CD8-positive, alpha-beta T cell (primary cell): ENCODE measurements at regions of chr6 and their contacts with region 1.

Region 1: GRCh38 chr6:62528894-62529526 is 243.0 kb upstream of the KHDRBS2 start:
- DNase-seq: no peak
- ATAC-seq: no peak
- H3K4me3 ChIP-seq: no peak overlapping the region
- H3K4me3 Mint-ChIP-seq: no peak overlapping the region
- H3K27ac ChIP-seq: no peak overlapping the region
- H3K27ac Mint-ChIP-seq: no peak overlapping the region
- H3K4me1 ChIP-seq: no peaks in the 10 kb centered on the region
- H3K4me1 Mint-ChIP-seq: no peaks in the 10 kb centered on the region
- H3K27me3 ChIP-seq: no peaks in the 10 kb centered on the region
- H3K27me3 Mint-ChIP-seq: no peaks in the 10 kb centered on the region
- CTCF ChIP-seq: no peak

Region 2: DNA sequence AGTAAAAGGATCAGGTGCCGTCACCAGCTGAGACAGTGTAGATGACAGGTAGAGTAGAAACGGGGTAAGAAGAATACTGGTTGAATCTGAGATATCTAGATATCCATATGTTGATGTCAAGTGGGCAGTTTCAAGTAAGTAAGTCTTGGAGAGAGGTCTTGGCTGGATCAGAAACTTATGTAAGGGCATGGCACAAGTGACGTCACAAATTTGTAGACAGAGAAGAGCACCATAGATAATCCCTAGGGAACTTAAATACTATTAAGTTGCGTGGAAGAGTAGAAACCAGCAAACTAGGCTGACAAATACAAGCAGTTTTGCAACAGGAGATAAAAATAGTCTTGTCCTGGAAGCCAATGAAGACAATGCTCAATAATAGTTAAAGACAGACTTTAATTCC is 366.1 kb before region 1 on chr6:
- CTCF ChIA-PET with region 1: no interaction called
- POLR2A ChIA-PET with region 1: no interaction called
- intact Hi-C with region 1: no loop called
- DNase-seq: no peak
- ATAC-seq: no peak
- H3K4me3 ChIP-seq: no peak overlapping the region
- H3K4me3 Mint-ChIP-seq: no peak overlapping the region
- H3K27ac ChIP-seq: no peak overlapping the region
- H3K27ac Mint-ChIP-seq: no peak overlapping the region
- H3K4me1 ChIP-seq: no peaks in the 10 kb centered on the region
- H3K4me1 Mint-ChIP-seq: no peaks in the 10 kb centered on the region
- H3K27me3 ChIP-seq: no peaks in the 10 kb centered on the region
- H3K27me3 Mint-ChIP-seq: no peaks in the 10 kb centered on the region
- CTCF ChIP-seq: no peak

Region 3: DNA sequence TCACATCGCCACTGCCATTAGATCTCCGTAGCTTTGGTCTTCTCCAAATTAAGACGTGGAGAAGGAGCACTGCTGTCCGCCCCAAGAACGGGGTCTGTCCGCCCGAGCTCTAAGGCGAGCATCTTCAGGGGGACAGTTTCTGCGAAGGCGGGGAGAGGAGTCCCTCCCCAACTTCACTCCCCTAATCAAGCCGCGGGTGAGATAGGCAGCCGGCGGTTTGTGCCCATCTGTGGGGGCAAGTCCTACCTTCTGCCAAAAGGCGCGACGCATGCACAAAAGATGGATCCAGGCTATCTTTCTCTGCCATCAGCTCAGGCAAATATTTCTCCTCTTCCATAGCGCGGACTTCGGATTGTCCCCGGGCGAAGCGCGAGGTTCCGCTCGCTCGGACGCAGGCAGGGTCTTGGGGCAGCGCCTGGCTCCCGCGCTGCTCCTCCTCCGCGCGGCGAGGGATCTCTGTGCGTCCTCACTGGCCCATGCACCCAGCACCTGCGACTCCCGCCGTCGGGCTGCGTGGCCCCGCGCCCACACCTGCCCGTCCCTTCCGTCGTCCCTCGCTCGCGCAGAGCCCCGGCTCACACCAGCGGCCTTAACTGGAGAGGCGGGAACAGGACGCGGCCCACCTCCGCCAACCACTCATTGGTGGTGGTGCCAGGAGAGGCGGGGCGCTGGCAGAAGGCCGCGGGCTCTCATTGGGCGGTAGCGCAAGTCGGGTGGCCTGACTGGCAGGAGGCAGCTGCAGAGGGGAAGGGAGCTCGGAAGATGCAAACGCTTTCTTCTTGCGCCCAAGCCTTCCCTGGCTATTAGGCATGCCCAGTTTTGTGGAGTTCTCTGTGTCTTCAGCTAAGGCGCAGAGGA is 243.2 kb before region 1 on chr6 and contains the start of gene KHDRBS2:
- CTCF ChIA-PET with region 1: no interaction called
- POLR2A ChIA-PET with region 1: no interaction called
- intact Hi-C with region 1: no loop called
- DNase-seq: peak in 6 of 9 experiments; percentile 1 to 27 (median 6)
- ATAC-seq: no peak
- H3K4me3 ChIP-seq: no peak within 1 kb of the TSS
- H3K4me3 Mint-ChIP-seq: peak within 1 kb of the TSS; percentile 11
- H3K27ac ChIP-seq: no peak within 1 kb of the TSS
- H3K27ac Mint-ChIP-seq: no peak within 1 kb of the TSS
- H3K4me1 ChIP-seq: no peaks in the 10 kb centered on the region
- H3K4me1 Mint-ChIP-seq: no peaks in the 10 kb centered on the region
- H3K27me3 ChIP-seq: no peaks in the 10 kb centered on the region
- H3K27me3 Mint-ChIP-seq: peaks cover 5% of the 10 kb centered on the region
- CTCF ChIP-seq: no peak
- total RNA-seq, gene KHDRBS2: not detected

Region 4: DNA sequence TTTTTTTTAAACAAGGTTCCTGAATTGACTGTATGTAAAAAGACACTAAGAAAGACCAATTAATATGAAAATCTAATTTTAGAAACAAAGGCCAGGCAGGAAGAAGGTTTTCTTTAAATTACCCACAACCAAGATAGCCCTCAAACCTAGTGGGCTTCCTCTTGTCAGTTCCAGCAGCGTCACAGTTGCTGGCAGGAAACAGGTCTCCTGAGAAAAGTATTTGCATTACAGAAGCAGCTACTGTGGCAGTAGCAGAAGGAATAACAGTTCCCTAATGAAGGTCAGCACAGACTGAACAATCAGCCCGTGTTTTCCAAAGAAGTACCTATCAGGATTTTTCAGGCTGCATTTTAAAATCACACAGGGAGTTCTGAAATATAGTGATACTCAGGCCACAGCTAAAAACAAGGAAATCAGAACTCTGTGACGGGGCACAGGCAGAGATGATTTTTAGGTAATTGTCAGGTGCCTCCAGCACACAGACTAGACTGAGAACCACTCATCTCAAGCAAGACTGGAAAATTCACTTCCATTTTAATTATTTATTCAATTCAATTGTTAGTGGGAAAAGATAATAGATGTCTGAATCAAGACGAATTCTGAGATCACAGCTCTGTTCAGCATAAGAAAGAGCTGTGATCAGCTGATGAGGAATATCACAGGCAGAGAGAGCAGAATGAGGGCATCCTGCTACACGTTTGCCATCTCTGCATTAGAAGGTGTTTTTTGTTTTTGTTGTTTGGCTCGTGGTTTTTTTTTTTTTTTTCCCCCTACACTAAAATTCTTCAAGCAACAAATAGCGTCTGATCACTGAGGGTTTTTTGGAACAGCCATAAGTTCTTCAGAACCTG is 12.5 kb before region 1 on chr6:
- CTCF ChIA-PET with region 1: no interaction called
- POLR2A ChIA-PET with region 1: no interaction called
- intact Hi-C with region 1: loop called in 1 of 2 experiments (anchors 1 kb)
- DNase-seq: no peak
- ATAC-seq: no peak
- H3K4me3 ChIP-seq: no peak overlapping the region
- H3K4me3 Mint-ChIP-seq: no peak overlapping the region
- H3K27ac ChIP-seq: no peak overlapping the region
- H3K27ac Mint-ChIP-seq: no peak overlapping the region
- H3K4me1 ChIP-seq: no peaks in the 10 kb centered on the region
- H3K4me1 Mint-ChIP-seq: no peaks in the 10 kb centered on the region
- H3K27me3 ChIP-seq: no peaks in the 10 kb centered on the region
- H3K27me3 Mint-ChIP-seq: no peaks in the 10 kb centered on the region
- CTCF ChIP-seq: no peak

Region 5: DNA sequence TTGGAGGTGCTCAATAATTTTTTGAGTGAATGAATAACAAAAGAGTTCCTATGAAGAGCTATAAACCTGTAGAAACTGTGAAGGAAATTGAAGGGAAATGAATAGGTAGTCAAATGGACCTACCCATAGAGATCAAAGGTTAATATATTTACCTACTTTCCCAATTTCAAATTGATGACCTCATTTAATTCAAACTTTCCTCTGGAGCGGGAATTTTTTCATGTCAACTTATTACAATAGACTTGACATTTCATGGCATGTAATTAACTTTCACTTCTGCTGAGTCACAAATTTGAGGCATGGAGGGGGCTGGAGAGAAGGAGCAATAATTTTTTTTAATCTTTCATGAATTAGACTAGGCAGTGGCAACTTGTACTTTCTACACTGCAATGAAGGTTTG is 36.8 kb after region 1 on chr6:
- CTCF ChIA-PET with region 1: no interaction called
- POLR2A ChIA-PET with region 1: no interaction called
- intact Hi-C with region 1: no loop called
- DNase-seq: no peak
- ATAC-seq: no peak
- H3K4me3 ChIP-seq: no peak overlapping the region
- H3K4me3 Mint-ChIP-seq: no peak overlapping the region
- H3K27ac ChIP-seq: no peak overlapping the region
- H3K27ac Mint-ChIP-seq: no peak overlapping the region
- H3K4me1 ChIP-seq: no peaks in the 10 kb centered on the region
- H3K4me1 Mint-ChIP-seq: no peaks in the 10 kb centered on the region
- H3K27me3 ChIP-seq: no peaks in the 10 kb centered on the region
- H3K27me3 Mint-ChIP-seq: no peaks in the 10 kb centered on the region
- CTCF ChIP-seq: no peak